ENCODE measurements at regions of chr17 and their contacts with region 1.

Region 1: GRCh38 chr17:64190488-64190887 is 60.5 kb upstream of the ERN1 start:
- DNase-seq: no peak
- H3K4me3 ChIP-seq: no peak overlapping the region
- H3K27ac ChIP-seq: no peak overlapping the region
- H3K4me1 ChIP-seq: no peaks in the 10 kb centered on the region
- H3K27me3 ChIP-seq: no peaks in the 10 kb centered on the region
- CTCF ChIP-seq: no peak
- EP300 ChIP-seq: no peak
- POLR2A ChIP-seq: no peak

Region 2: GRCh38 chr17:64591944-64592343 is 401.5 kb after region 1 on chr17:
- in situ Hi-C with region 1: no loop called
- intact Hi-C with region 1: loop called (anchors 5 kb)
- DNase-seq: no peak
- H3K4me3 ChIP-seq: no peak overlapping the region
- H3K27ac ChIP-seq: no peak overlapping the region
- H3K4me1 ChIP-seq: no peaks in the 10 kb centered on the region
- H3K27me3 ChIP-seq: no peaks in the 10 kb centered on the region
- CTCF ChIP-seq: no peak
- EP300 ChIP-seq: no peak
- POLR2A ChIP-seq: no peak

Measured in transverse colon (tissue), 4 donors.